CD8-positive, alpha-beta memory T cell (primary cell): ENCODE measurements at regions of chrX and their contacts with region 1.

Region 1: DNA sequence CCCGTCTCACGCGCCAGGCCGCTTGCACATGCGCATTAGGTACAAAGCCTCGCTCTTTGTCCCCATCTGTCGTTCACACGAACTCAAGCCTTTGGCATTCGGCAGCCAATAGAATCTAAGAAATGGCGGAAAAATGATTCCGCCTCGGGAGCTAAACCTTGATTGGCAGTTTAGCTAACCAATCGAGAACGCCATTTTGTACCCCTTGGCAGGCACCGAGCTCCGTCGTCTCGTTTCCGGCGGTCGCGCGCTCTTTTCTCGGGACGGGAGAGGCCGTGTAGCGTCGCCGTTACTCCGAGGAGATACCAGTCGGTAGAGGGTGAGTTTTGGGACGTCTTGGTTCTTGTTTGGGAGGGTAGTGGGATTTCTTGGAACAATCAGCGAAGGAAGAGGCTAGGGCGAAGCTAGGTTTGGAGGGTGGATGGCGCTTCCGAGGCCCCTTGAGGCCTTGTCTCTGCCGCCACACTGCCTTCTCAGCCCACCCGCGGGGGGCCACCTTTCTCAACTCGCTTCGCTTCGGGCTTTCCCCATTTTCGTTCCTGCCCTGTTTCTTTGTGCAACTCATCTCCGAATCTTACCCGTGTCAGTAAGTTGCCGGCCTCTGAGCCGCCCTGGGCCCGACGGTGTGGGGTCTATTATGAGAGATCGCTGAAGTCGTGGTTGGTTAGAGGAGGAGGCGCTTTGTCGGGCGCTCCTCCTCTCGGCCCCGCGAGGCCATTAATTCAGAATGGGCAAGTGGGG is at the start of gene NONO:
- DNase-seq: peak; percentile 74 to 92 (median 88)
- H3K4me3 ChIP-seq: peak within 1 kb of the TSS; percentile 65
- H3K4me3 Mint-ChIP-seq: peak within 1 kb of the TSS; percentile 95 to 100 (median 97)
- H3K27ac ChIP-seq: peak within 1 kb of the TSS; percentile 89
- H3K27ac Mint-ChIP-seq: peak within 1 kb of the TSS; percentile 98 to 100 (median 99)
- H3K4me1 ChIP-seq: peaks cover 16% of the 10 kb centered on the region
- H3K4me1 Mint-ChIP-seq: peaks cover 25 to 39% (median 32%) of the 10 kb centered on the region in 3 donors
- H3K27me3 ChIP-seq: no peaks in the 10 kb centered on the region
- H3K27me3 Mint-ChIP-seq: peaks cover 0 to 3% of the 10 kb centered on the region in 2 donors
- total RNA-seq, gene NONO: 532 to 542 TPM

Region 2: DNA sequence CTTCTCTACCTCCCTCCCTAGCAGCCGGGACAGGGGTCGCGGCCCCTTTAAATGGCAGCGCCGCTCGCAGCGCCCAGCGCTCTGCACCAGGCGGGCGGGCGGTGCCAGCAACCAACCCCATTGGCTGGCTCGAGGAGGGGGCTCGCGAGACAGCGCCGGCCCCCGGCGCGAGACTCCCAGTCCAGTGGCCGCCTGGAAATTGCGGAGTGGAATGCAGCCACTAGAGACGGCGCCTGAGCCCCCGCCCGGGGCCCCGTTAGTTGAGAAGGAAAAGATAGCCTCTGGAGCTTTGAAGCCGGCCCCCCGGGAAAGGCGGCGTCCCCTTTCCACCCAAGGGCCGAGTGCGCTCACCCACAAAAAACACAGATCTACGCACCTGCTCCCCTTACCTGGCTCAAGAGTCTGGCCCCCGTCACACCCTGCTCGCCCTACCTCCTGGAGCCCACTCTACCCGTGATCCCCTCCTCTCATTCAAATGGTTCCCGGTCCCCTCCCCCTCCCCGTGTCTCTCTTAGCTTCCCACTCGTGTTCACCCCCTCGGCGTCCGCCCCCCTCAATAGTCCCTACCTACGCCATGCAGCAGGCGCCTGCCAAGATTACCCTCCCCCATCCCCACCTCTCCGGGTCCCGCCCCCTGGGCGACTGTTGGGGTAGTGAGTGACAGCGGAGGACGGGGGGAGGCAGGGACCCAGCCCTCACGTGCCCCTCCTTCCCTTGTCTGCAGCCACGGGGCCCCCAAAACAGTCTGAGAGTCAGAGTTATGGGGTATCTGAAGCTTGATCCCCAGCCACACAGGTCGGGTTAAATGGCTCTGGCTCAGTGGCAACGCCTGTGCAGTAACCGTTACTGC is 29.3 kb before region 1 on chrX and contains the start of gene ZMYM3:
- CTCF ChIA-PET with region 1: interaction called, 7 read pairs
- POLR2A ChIA-PET with region 1: interaction called, 27 read pairs
- DNase-seq: peak; percentile 73 to 90 (median 79)
- H3K4me3 ChIP-seq: peak within 1 kb of the TSS; percentile 81
- H3K4me3 Mint-ChIP-seq: peak within 1 kb of the TSS; percentile 84 to 96 (median 90)
- H3K27ac ChIP-seq: peak within 1 kb of the TSS; percentile 76
- H3K27ac Mint-ChIP-seq: peak within 1 kb of the TSS; percentile 79 to 100 (median 94)
- H3K4me1 ChIP-seq: peaks cover 28% of the 10 kb centered on the region
- H3K4me1 Mint-ChIP-seq: peaks cover 15 to 32% (median 17%) of the 10 kb centered on the region in 3 donors
- H3K27me3 ChIP-seq: no peaks in the 10 kb centered on the region
- H3K27me3 Mint-ChIP-seq: peaks cover 0 to 8% of the 10 kb centered on the region in 2 donors
- total RNA-seq, gene ZMYM3: 16.5 to 16.7 TPM